Activated CD4-positive, alpha-beta memory T cell treated with anti-CD3 and anti-CD28 coated beads, Interleukin-2, amount 10 ng/mL, durations not matched to agents 7 days and 5 days (primary cell): ENCODE measurements at regions of chr12 and their contacts with region 1.

Region 1: GRCh38 chr12:56645717-56646446 is at the start of gene ATP5F1B:
- DNase-seq: peak; percentile 95
- H3K4me3 Mint-ChIP-seq: peak within 1 kb of the TSS; percentile 90
- H3K27ac Mint-ChIP-seq: peak within 1 kb of the TSS; percentile 95
- H3K4me1 Mint-ChIP-seq: peaks cover 35% of the 10 kb centered on the region
- H3K27me3 Mint-ChIP-seq: no peaks in the 10 kb centered on the region
- total RNA-seq, gene ATP5F1B: 529 to 549 TPM

Region 2: GRCh38 chr12:56630160-56630632 is 15.7 kb before region 1 on chr12 and contains the start of gene BAZ2A:
- CTCF ChIA-PET with region 1: interaction called, 50 read pairs
- POLR2A ChIA-PET with region 1: interaction called, 103 read pairs
- DNase-seq: peak; percentile 91
- H3K4me3 Mint-ChIP-seq: peak within 1 kb of the TSS; percentile 92
- H3K27ac Mint-ChIP-seq: peak within 1 kb of the TSS; percentile 86
- H3K4me1 Mint-ChIP-seq: peaks cover 69% of the 10 kb centered on the region
- H3K27me3 Mint-ChIP-seq: no peaks in the 10 kb centered on the region
- total RNA-seq, gene BAZ2A: 121 to 126 TPM

Region 3: GRCh38 chr12:56657416-56658379 is 11.8 kb after region 1 on chr12:
- CTCF ChIA-PET with region 1: no interaction called
- POLR2A ChIA-PET with region 1: interaction called, 17 read pairs
- DNase-seq: peak; percentile 14
- H3K4me3 Mint-ChIP-seq: no peak overlapping the region
- H3K27ac Mint-ChIP-seq: no peak overlapping the region
- H3K4me1 Mint-ChIP-seq: peaks cover 10% of the 10 kb centered on the region
- H3K27me3 Mint-ChIP-seq: no peaks in the 10 kb centered on the region

Region 4: GRCh38 chr12:56751712-56752598 is 106.1 kb after region 1 on chr12 and contains the start of gene PRIM1:
- CTCF ChIA-PET with region 1: no interaction called
- POLR2A ChIA-PET with region 1: interaction called, 14 read pairs
- DNase-seq: peak; percentile 89
- H3K4me3 Mint-ChIP-seq: peak within 1 kb of the TSS; percentile 99
- H3K27ac Mint-ChIP-seq: peak within 1 kb of the TSS; percentile 97
- H3K4me1 Mint-ChIP-seq: peaks cover 50% of the 10 kb centered on the region
- H3K27me3 Mint-ChIP-seq: no peaks in the 10 kb centered on the region
- total RNA-seq, gene PRIM1: 45.0 to 46.2 TPM